GM10248 (cell line): ENCODE measurements at regions of chr1 and their contacts with region 1.

Region 1: DNA sequence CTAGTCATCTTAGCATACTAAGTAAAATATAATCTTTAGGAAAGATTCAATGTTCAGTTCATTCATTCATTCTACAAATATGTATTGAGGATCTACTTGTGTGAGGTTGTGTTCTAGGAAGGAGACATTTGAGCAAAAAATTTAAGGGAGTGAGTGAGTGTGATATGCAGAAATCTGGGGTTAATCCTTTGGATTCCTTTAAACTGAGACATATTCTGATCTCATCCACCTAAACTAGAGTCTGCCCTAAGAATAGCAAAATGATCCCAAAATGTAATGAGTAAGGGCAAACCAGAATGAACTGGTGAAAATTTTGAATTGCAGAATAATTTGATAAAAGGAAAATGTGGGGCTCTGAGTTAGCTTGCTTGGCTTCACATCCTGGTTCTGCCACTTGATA is 8.6 kb downstream of the UBE2U start:
- DNase-seq: no peak
- CTCF ChIP-seq: no peak

Region 2: DNA sequence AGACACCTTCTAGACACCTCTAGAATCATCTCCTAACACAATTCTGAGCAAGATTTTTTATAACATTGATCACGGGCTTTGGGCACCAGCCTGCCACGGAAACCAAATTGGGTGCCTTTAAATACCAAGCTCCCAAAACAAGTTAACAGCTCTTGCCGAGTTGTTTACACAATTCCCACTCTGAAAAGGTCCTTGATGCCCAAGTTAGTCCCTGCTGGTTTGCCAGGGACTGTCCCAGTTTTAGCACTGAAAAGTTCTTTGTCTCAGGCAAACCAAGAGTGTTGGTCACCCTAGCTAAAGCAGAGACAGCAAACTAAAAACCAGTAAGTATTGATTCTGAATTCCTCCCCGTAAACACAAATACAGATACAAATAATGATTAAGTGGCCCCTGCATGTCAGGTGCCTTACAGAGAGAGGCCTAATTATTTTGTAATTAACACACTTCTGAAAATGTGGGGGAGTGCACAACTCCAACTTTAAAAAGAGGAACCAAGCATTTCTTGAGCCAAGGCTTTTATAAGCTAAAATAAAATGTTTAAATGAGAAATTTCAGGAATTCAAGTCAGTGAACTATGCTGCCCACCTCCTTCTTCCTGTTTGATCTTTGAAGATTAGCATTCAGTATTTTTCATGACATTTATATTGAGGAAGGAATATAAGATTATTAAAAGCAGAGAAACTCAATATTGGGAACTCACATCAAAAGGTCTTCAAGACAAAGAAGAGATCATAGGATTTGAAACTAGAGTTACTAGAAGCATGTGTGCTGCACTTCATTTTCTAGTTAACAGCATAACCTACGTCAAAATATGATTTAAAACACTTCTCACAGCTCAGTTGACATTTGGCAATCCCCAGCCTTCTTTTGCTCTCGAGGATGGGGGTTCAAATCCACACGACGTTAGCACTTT is 17.6 kb before region 1 on chr1:
- CTCF ChIA-PET with region 1: no interaction called
- POLR2A ChIA-PET with region 1: no interaction called
- DNase-seq: no peak
- CTCF ChIP-seq: no peak

Region 3: DNA sequence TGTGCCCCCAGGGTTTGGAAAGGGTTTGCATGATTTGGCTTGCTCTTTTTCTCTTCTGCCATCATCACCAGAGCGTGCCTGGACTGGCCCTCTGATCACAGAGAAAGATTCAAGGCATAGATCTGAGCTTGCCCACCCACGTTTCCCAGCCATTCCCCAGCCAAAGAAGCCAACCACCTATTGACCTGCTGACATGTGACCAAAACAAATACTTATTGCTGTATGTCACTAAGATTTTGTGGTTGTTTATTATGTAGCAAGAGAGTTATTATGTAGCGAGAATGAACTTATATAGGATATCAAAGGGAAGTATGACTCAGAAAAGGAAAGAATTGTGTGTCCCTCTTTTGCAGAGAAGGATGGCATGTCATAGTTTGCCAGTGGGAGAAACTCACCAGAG is 51.3 kb after region 1 on chr1:
- CTCF ChIA-PET with region 1: no interaction called
- POLR2A ChIA-PET with region 1: no interaction called
- DNase-seq: no peak
- CTCF ChIP-seq: no peak

Region 4: GRCh38 chr1:64608005-64608650 is 396.1 kb after region 1 on chr1:
- CTCF ChIA-PET with region 1: no interaction called
- POLR2A ChIA-PET with region 1: interaction called, 11 read pairs
- DNase-seq: no peak
- CTCF ChIP-seq: no peak